Activated CD4-positive, alpha-beta T cell treated with anti-CD3 and anti-CD28 coated beads for 36 hours (primary cell): ENCODE measurements at regions of chr7 and their contacts with region 1.

Region 1: DNA sequence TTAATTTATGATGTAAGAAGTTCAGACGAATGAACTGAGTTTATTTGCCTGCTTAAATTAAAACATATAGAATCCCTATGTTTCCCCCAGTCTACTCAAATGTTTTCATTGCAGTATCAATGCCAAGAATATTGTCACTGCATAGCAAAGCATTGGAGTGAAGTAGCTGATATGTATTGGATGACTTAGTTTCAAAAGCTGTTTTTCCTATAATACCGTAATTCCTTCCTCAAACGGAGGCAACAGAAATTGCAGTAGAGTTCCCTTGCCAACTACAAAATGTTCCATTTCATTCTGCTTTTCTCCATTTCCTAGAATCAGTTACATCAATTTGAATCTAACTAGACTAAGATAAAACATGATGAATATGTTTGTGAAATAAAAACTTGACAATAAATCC is 174.1 kb downstream of the CNTNAP2 start:
- DNase-seq: no peak
- ATAC-seq: no peak
- H3K4me3 Mint-ChIP-seq: no peak overlapping the region
- H3K27ac Mint-ChIP-seq: no peak overlapping the region
- H3K4me1 Mint-ChIP-seq: no peaks in the 10 kb centered on the region
- H3K27me3 Mint-ChIP-seq: no peaks in the 10 kb centered on the region

Region 2: DNA sequence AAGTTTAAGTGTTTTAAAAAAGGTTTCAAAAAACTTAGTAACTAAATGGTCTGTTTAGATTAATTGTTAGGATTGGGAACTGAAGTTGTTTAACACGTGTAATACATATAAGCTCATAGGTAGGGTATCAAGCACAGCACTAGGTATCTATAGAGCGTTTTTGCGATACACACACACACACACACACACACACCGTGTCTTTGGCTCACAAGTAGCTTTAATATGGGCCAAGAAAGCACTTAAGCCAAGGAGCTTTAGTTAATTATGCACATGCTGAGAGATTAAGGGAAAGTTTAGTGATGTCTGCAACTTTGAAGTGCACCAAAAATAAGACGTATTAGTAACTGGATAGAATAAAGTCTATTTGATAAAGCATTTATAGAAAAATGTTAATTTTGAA is 268.0 kb before region 1 on chr7:
- CTCF ChIA-PET with region 1: no interaction called
- POLR2A ChIA-PET with region 1: no interaction called
- intact Hi-C with region 1: loop called in 1 of 2 experiments (anchors 10 kb)
- DNase-seq: no peak
- ATAC-seq: no peak
- H3K4me3 Mint-ChIP-seq: no peak overlapping the region
- H3K27ac Mint-ChIP-seq: no peak overlapping the region
- H3K4me1 Mint-ChIP-seq: no peaks in the 10 kb centered on the region
- H3K27me3 Mint-ChIP-seq: no peaks in the 10 kb centered on the region

Region 3: DNA sequence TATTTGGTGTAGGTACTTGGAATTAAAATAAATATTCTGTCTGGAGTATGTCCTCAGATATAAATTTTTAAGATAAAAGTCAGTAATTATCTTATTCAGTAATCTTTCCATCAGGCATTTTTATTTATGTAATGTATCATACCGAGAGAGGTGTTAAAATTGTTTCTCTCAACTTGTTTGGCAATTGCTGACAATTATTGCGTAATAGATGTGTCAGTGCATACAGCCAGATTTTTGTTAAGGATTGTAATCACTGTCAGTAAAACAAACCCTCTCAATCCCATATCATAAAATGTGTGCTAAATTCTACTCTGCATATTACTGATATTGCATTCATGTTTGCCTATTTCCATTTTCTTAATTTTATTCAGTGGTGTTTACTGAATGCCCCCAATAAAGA is 104.9 kb before region 1 on chr7:
- CTCF ChIA-PET with region 1: no interaction called
- POLR2A ChIA-PET with region 1: no interaction called
- intact Hi-C with region 1: no loop called
- DNase-seq: no peak
- ATAC-seq: no peak
- H3K4me3 Mint-ChIP-seq: no peak overlapping the region
- H3K27ac Mint-ChIP-seq: no peak overlapping the region
- H3K4me1 Mint-ChIP-seq: no peaks in the 10 kb centered on the region
- H3K27me3 Mint-ChIP-seq: no peaks in the 10 kb centered on the region